Ascending aorta (tissue), 2 donors: ENCODE measurements at regions of chr6 and their contacts with region 1.

Region 1: GRCh38 chr6:163956571-163957407 is 542.3 kb downstream of the QKI start:
- DNase-seq: peak; percentile 43 to 84
- H3K4me3 ChIP-seq: no peak overlapping the region
- H3K27ac ChIP-seq: no peak overlapping the region
- H3K4me1 ChIP-seq: no peaks in the 10 kb centered on the region
- H3K27me3 ChIP-seq: no peaks in the 10 kb centered on the region
- CTCF ChIP-seq: peak; percentile 71 to 81 (median 80)

Region 2: DNA sequence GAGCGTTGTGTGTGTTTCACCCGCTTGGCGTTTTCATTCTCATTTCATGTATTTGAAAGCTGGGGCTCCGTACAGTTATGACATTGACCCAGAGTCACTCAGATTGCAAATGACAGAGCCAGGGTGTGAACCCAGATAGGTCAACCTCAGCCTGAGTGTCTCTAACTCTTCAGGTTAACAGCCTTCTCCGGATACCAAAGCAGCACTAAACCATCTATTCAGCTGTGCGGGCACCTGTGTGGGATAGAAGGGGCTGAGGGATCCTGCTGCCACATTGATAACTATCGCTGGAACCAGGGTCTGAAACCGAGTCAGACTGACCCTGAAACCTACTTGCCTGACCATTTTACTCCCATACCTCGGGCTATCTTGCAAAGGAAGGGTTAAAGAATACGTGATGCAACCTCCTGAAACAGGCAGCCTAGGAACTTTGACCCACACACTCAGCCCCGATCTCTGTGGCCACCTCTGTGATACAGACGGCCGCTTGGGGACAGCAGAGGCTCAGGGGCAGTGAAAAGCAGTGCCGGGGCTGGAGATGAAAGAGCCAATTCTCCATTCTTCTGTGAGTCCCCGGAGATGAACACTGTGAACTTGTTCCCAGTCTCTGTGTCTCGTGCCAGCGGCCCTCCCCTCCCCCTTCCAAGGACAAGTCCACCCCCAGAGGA is 775.8 kb before region 1 on chr6:
- intact Hi-C with region 1: loop called (anchors 5 kb)
- DNase-seq: peak; percentile 37 to 79
- H3K4me3 ChIP-seq: no peak overlapping the region
- H3K27ac ChIP-seq: no peak overlapping the region
- H3K4me1 ChIP-seq: no peaks in the 10 kb centered on the region
- H3K27me3 ChIP-seq: no peaks in the 10 kb centered on the region
- CTCF ChIP-seq: peak; percentile 42 to 74 (median 46)